GM10248 (cell line): ENCODE measurements at regions of chr1 and their contacts with region 1.

Region 1: GRCh38 chr1:25810341-25811299 is 9.1 kb upstream of the MTFR1L start:
- DNase-seq: peak; percentile 82
- CTCF ChIP-seq: peak; percentile 99

Region 2: DNA sequence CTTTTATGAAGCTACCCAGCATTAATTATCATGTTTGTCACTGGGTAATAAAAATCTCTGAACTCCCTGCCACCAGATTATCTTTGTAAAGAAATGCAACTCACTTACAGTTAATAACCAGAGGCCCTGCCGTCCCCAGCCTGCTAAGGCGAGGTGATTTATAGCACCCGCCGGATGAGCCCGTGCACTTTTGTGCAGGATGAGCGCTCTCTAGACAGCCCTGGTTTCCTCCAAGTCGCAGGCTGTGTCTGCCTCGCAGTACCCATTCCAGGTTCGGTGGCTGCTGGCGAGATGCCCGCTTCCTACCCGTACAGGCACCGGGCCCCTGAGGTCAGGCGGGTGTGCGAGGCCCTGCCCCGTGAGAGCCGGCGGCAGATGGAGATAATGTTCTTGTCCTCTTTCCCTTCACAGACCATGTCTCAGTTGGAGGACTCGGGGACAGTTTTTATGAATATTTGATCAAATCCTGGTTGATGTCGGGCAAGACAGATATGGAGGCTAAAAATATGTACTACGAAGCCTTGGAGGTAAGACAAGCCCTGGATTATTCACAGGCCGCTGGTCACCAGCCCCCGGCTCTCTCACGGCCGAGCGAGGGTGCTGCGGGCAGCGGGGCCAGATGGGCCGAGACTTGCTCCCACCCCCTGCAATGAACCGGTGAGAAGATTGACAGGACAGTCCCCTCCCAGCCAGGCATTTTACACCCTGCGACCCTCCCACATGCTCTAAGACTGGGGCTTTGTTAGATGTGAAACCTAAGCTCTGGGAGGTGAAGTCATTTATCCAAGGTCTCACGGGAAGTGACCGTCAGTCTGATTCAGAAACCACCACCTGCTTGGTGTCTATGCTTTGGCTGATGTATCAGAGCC is 39.1 kb before region 1 on chr1:
- CTCF ChIA-PET with region 1: no interaction called
- POLR2A ChIA-PET with region 1: no interaction called
- DNase-seq: peak; percentile 78
- CTCF ChIP-seq: no peak

Region 3: GRCh38 chr1:25796811-25797458 is 13.7 kb before region 1 on chr1:
- CTCF ChIA-PET with region 1: interaction called, 65 read pairs
- POLR2A ChIA-PET with region 1: interaction called, 6 read pairs
- DNase-seq: peak; percentile 71
- CTCF ChIP-seq: peak; percentile 87

Region 4: DNA sequence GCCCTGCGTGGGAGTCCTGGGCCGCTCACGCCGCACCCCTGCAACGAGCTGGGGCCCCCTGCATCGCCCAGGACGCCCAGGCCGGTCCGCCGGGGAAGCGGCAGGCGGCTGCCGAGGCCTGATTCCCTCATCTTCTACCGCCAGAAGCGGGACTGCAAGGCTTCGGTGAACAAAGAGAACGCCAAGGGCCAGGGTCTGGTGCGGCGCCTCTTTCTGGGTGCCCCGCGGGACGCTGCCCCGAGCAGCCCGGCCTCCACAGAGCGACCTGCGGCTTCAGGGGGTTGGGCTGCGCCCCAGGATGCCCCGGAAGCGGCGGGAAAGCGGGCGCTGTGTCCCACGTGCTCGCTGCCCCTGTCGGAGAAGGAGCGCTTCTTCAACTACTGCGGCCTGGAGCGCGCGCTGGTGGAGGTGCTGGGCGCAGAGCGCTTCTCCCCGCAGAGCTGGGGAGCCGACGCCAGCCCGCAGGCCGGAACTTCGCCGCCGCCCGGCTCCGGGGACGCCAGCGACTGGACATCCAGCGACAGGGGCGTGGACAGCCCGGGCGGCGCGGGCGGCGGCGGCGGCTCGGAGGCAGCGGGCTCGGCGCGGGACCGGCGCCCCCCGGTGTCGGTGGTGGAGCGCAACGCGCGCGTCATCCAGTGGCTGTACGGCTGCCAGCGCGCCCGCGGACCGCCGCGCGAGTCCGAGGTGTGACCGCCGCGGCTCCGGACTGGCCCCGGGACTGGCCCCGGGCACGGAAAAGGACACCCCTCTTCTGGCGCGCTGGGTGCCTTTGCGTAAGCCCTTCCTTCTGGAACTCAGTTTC is 351.0 kb after region 1 on chr1:
- CTCF ChIA-PET with region 1: no interaction called
- POLR2A ChIA-PET with region 1: no interaction called
- DNase-seq: no peak
- CTCF ChIP-seq: peak; percentile 26